ENCODE measurements at regions of chr16 and their contacts with region 1.

Region 1: DNA sequence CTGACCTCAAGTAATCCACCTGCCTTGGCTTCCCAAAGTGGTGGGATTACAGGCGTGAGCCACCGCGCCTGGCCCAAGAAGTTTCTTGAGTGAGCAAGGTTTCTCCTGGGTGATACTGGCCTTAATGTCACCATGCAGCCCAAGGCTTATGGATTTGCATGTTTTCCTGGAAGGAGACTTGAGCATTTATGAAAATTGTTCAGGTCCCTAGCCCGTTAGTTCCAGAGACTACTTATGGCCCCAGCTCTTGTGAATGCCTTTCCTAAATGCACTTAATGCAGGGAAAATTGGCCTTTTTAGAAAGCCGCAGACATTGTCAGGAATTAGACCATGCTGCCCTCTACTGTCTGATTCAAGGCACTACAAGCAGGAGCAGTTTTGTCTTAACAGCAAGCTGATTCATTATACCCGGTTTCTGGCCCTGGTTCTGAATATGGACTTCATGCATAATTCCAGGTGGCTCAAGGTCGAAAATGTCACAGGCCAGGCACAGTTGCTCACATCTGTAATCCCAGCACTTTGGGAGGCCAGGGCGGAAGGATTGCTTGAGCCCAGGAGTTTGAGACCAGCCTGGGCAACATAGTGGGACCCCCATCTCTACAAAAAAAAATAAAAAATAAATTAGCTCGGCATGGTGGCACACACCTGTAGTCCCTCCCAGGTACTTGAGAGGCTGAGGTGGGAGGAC is 91.3 kb downstream of the SNX29 start:
- DNase-seq: peak in 1 of 2 donors; percentile 44
- ATAC-seq: peak; percentile 81
- H3K4me3 ChIP-seq: no peak overlapping the region
- H3K27ac ChIP-seq: no peak overlapping the region
- H3K4me1 ChIP-seq: no peaks in the 10 kb centered on the region
- H3K27me3 ChIP-seq: no peaks in the 10 kb centered on the region

Region 2: DNA sequence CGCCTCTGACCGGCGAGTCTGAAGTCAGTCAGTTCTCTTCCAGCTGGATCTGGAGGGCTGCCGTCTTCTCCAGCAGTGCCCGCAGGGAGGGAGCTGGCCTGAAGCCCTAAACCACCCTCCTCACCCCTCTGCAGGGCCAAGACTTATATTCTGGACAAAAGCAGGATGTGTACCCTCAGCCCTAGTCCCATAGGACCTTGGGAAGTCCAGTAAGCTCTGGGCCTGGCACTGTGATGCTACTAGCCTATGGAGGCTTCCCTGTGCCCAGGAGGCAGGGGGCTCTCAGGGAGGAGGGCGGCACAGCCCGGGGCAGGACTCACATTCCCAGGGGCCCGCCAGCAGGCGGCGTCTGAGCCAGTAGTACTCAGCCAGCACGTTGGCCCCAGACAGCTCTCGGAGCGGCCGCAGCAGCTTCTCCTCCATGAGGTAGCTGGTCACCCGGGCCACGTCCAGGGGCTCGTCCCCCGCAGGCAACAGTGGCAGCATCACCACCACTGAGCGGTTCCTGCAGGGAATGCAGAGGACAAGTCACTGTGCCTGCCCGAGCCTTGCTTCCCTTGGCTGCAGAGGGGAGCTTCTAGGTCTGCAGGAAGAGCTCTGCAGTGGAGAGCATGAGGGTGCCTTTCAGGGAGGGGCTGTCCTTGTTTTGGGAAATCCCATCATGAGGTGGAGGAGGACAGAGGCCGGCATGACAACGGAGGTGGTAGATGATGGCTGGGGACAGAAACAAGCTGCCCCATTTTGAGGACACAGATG is 680.9 kb before region 1 on chr16:
- intact Hi-C with region 1: loop called in 1 of 2 experiments (anchors 10 kb)
- DNase-seq: peak; percentile 69 to 88
- ATAC-seq: peak; percentile 42
- H3K4me3 ChIP-seq: no peak overlapping the region
- H3K27ac ChIP-seq: no peak overlapping the region
- H3K4me1 ChIP-seq: no peaks in the 10 kb centered on the region
- H3K27me3 ChIP-seq: no peaks in the 10 kb centered on the region

Region 3: GRCh38 chr16:11871193-11871592 is 196.7 kb before region 1 on chr16:
- intact Hi-C with region 1: loop called in 1 of 2 experiments (anchors 10 kb)
- DNase-seq: no peak
- ATAC-seq: no peak
- H3K4me3 ChIP-seq: no peak overlapping the region
- H3K27ac ChIP-seq: peak overlapping the region; percentile 80 to 82
- H3K4me1 ChIP-seq: no peaks in the 10 kb centered on the region
- H3K27me3 ChIP-seq: no peaks in the 10 kb centered on the region

Region 4: GRCh38 chr16:11949527-11949926 is 118.3 kb before region 1 on chr16:
- intact Hi-C with region 1: loop called in 1 of 2 experiments (anchors 5 kb)
- DNase-seq: no peak
- ATAC-seq: peak; percentile 50
- H3K4me3 ChIP-seq: no peak overlapping the region
- H3K27ac ChIP-seq: no peak overlapping the region
- H3K4me1 ChIP-seq: no peaks in the 10 kb centered on the region
- H3K27me3 ChIP-seq: no peaks in the 10 kb centered on the region

Region 5: DNA sequence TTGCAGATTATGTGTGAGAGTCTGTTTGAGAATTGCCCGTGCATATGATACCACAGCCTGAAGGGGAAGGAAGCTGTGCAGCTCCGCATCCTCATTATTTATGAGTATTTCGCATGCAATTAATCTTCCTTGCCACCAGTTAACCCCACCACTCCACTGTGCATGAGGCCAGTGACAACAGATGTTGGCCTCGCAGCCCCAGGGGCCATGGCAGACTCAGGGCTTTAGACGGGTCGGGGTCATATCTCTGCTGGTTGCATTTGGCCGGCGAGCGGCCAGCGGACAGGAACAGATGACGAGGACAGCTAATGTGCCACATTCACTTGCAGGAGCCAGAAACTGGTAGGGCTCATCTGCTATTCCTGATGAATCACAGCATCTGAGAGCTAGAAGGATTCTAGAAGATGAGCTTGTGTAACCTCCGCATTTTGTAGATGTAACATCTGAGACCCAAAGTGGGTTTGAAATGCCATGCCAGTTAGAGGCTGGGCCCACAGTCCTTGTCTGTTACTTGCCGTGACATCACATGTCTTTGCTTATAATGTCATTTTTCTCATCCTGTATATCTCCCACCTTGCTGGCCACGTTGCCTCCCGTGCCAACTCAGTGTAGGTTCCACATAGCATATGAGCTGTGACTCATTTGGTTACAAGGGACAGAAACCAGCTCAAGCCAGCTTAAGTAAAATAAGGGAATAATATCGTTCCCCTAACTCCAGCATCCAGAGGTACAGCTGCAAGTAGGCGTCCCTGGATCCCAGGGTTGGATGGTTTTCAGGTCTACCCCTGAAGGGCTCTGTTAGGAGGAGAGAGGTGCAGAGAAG is 45.9 kb after region 1 on chr16:
- intact Hi-C with region 1: no loop called
- DNase-seq: peak in 1 of 2 donors; percentile 59
- ATAC-seq: no peak
- H3K4me3 ChIP-seq: no peak overlapping the region
- H3K27ac ChIP-seq: no peak overlapping the region
- H3K4me1 ChIP-seq: no peaks in the 10 kb centered on the region
- H3K27me3 ChIP-seq: no peaks in the 10 kb centered on the region